ENCODE measurements at regions of chr10 and their contacts with region 1.

Region 1: GRCh38 chr10:119750391-119751230 is 24.8 kb downstream of the INPP5F start:
- DNase-seq: peak; percentile 82
- H3K4me3 ChIP-seq: no peak overlapping the region
- H3K27ac ChIP-seq: no peak overlapping the region
- H3K4me1 ChIP-seq: peaks cover 8% of the 10 kb centered on the region
- H3K27me3 ChIP-seq: no peaks in the 10 kb centered on the region
- CTCF ChIP-seq: peak; percentile 86 to 94
- POLR2A ChIP-seq: no peak

Region 2: GRCh38 chr10:119608316-119609155 is 142.1 kb before region 1 on chr10:
- CTCF ChIA-PET with region 1: interaction called, 14 read pairs
- POLR2A ChIA-PET with region 1: no interaction called
- dilution Hi-C with region 1: no loop called
- intact Hi-C with region 1: no loop called
- DNase-seq: peak; percentile 42
- H3K4me3 ChIP-seq: no peak overlapping the region
- H3K27ac ChIP-seq: no peak overlapping the region
- H3K4me1 ChIP-seq: no peaks in the 10 kb centered on the region
- H3K27me3 ChIP-seq: no peaks in the 10 kb centered on the region
- CTCF ChIP-seq: peak; percentile 66 to 68
- POLR2A ChIP-seq: no peak

Region 3: DNA sequence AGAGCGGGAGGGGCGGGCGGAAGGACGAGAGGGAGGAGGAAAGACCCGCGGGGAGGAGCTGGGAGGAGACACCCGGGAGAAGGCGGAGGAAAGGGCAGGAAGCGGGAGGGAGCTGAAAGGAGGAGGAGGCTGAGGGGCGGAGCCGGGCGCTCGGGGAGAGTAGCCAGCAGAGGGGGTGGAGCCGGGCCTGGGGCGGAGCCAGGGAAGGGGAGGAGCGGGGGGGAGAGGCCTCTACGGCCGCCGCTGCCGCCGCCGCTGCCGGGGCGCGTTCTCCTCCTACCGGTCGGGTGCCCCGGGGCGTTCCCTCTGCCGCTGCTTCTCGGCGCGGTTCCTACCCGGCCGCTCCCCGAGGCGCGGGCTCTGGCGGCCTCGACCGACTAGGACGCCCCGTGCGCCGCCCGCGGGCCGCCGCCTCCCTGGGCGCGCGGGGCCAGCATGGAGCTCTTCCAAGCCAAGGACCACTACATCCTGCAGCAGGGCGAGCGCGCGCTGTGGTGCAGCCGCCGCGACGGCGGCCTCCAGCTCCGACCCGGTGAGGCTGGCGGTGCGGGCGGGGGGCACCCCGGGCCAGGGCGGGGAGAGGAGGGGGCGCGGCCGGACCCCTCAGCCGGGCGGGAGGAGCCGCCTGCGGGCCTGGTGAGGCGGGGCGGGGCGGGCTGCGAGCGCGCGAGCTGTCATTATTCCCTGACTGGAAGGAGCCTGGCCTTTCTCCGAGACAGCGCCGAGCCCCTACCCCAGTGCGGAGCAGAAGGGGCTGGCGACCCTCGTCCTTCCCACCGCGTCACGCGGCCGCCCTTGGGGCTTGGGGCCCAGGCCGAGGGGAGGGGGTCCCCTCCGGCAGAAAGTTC is 24.6 kb before region 1 on chr10 and contains the start of gene INPP5F:
- CTCF ChIA-PET with region 1: interaction called, 27 read pairs
- POLR2A ChIA-PET with region 1: interaction called, 3 read pairs
- dilution Hi-C with region 1: no loop called
- intact Hi-C with region 1: no loop called
- DNase-seq: peak; percentile 97
- H3K4me3 ChIP-seq: peak within 1 kb of the TSS; percentile 56 to 81 (median 74)
- H3K27ac ChIP-seq: peak within 1 kb of the TSS; percentile 80
- H3K4me1 ChIP-seq: peaks cover 20% of the 10 kb centered on the region
- H3K27me3 ChIP-seq: no peaks in the 10 kb centered on the region
- CTCF ChIP-seq: no peak
- POLR2A ChIP-seq: peak; percentile 68
- total RNA-seq, gene INPP5F: 20.3 and 26.6 TPM in 2 replicates

Region 4: GRCh38 chr10:119769886-119770285 is 19.3 kb after region 1 on chr10:
- CTCF ChIA-PET with region 1: interaction called, 67 read pairs
- POLR2A ChIA-PET with region 1: interaction called, 3 read pairs
- dilution Hi-C with region 1: no loop called
- intact Hi-C with region 1: loop called (anchors 1 kb)
- DNase-seq: peak; percentile 86
- H3K4me3 ChIP-seq: peak overlapping the region in 1 of 3 experiments; percentile 57
- H3K27ac ChIP-seq: peak overlapping the region; percentile 91
- H3K4me1 ChIP-seq: peaks cover 53% of the 10 kb centered on the region
- H3K27me3 ChIP-seq: no peaks in the 10 kb centered on the region
- CTCF ChIP-seq: no peak
- POLR2A ChIP-seq: peak; percentile 53

Region 5: GRCh38 chr10:119812684-119813083 is 62.1 kb after region 1 on chr10:
- CTCF ChIA-PET with region 1: interaction called, 26 read pairs
- POLR2A ChIA-PET with region 1: no interaction called
- dilution Hi-C with region 1: no loop called
- intact Hi-C with region 1: no loop called
- DNase-seq: peak; percentile 64
- H3K4me3 ChIP-seq: no peak overlapping the region
- H3K27ac ChIP-seq: no peak overlapping the region
- H3K4me1 ChIP-seq: peaks cover 9% of the 10 kb centered on the region
- H3K27me3 ChIP-seq: no peaks in the 10 kb centered on the region
- CTCF ChIP-seq: no peak
- POLR2A ChIP-seq: no peak

Region 6: GRCh38 chr10:119849031-119849789 is 98.6 kb after region 1 on chr10:
- CTCF ChIA-PET with region 1: interaction called, 33 read pairs
- POLR2A ChIA-PET with region 1: no interaction called
- dilution Hi-C with region 1: no loop called
- intact Hi-C with region 1: no loop called
- DNase-seq: no peak
- H3K4me3 ChIP-seq: no peak overlapping the region
- H3K27ac ChIP-seq: no peak overlapping the region
- H3K4me1 ChIP-seq: no peaks in the 10 kb centered on the region
- H3K27me3 ChIP-seq: no peaks in the 10 kb centered on the region
- CTCF ChIP-seq: no peak
- POLR2A ChIP-seq: no peak

Region 7: GRCh38 chr10:119919826-119920225 is 169.2 kb after region 1 on chr10:
- CTCF ChIA-PET with region 1: interaction called, 6 read pairs
- POLR2A ChIA-PET with region 1: no interaction called
- dilution Hi-C with region 1: no loop called
- intact Hi-C with region 1: loop called (anchors 1 kb)
- DNase-seq: no peak
- H3K4me3 ChIP-seq: no peak overlapping the region
- H3K27ac ChIP-seq: no peak overlapping the region
- H3K4me1 ChIP-seq: no peaks in the 10 kb centered on the region
- H3K27me3 ChIP-seq: no peaks in the 10 kb centered on the region
- CTCF ChIP-seq: no peak
- POLR2A ChIP-seq: no peak